OCI-LY7 (cell line): ENCODE measurements at regions of chr2 and their contacts with region 1.

Region 1: GRCh38 chr2:70258532-70258874 is 566 bp downstream of the PCYOX1 start:
- DNase-seq: no peak
- H3K4me3 ChIP-seq: peak overlapping the region; percentile 85
- H3K27ac ChIP-seq: no peak overlapping the region
- H3K4me1 ChIP-seq: peaks cover 15% of the 10 kb centered on the region
- CTCF ChIP-seq: no peak

Region 2: DNA sequence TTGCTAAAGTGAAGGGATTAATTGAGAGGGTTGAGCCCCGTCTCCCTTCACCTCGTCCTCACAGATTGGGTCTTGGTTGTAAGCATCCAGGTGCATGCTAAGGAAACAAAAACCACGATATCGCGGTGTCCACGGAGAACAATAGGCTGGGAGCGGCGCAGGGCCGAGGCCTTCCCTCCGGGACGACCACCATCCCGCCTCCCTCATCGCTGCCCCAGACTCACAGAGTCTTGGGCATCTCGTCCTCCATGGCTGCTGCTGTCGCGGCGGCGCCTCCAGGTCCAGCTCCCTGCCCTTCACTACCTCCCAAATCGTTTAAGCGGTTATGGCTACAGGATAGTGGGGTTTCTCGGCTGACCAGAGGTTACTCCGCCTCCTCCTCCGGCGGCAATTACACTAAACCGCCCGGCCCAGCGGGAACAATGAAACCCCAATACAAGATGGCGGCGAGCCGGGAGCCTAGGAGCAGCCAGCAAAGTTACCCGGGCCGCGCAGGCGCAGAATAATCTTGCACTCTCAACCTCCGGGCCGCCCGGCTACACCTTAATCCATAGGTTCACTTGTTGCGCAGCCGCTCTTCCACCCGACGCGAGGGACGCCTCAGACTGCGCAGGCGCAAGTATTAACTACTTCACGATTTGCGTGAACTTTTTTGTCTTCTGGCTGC is 10.2 kb before region 1 on chr2 and contains the start of gene TIA1:
- CTCF ChIA-PET with region 1: no interaction called
- POLR2A ChIA-PET with region 1: interaction called, 36 read pairs
- intact Hi-C with region 1: loop called (anchors 1 kb)
- DNase-seq: peak; percentile 100
- H3K4me3 ChIP-seq: peak within 1 kb of the TSS; percentile 86
- H3K27ac ChIP-seq: peak within 1 kb of the TSS; percentile 86
- H3K4me1 ChIP-seq: peaks cover 29% of the 10 kb centered on the region
- CTCF ChIP-seq: no peak
- total RNA-seq, gene TIA1: 129 and 147 TPM in 2 replicates

Region 3: DNA sequence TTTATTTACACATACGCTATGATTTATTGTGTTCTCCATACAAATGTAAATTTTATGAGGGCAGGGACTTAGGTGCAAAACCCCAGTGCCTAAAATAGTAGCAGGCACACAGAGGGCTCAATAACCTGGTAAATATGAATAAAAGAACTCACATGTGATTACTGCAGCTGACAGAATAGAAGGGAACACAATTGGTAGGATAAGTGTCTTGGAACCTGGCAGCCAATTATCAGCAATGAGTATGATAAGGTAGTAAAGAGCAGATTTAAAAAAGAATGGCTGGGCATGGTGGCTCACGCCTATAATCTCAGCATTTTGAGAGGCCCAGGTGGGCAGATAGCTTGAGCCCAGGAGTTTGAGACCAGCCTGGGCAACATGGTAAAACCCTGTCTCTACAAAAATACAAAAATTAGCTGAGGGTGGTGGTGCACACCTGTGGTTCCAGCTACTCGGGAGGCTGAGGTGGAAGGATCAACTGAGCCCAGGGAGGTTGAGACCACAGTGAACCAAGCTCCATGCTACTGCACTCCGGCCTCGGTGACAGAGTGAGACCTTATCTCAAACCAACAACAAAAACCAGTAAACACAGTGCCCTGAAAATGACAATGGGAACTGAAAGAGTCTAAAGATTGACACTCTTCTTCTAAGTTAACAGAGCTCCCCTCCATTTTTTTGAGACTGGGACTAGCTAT is 25.1 kb after region 1 on chr2:
- CTCF ChIA-PET with region 1: interaction called, 5 read pairs
- POLR2A ChIA-PET with region 1: interaction called, 10 read pairs
- intact Hi-C with region 1: no loop called
- DNase-seq: no peak
- H3K4me3 ChIP-seq: no peak overlapping the region
- H3K27ac ChIP-seq: no peak overlapping the region
- H3K4me1 ChIP-seq: no peaks in the 10 kb centered on the region
- CTCF ChIP-seq: no peak